ENCODE measurements at regions of chr11 and their contacts with region 1.

Region 1: DNA sequence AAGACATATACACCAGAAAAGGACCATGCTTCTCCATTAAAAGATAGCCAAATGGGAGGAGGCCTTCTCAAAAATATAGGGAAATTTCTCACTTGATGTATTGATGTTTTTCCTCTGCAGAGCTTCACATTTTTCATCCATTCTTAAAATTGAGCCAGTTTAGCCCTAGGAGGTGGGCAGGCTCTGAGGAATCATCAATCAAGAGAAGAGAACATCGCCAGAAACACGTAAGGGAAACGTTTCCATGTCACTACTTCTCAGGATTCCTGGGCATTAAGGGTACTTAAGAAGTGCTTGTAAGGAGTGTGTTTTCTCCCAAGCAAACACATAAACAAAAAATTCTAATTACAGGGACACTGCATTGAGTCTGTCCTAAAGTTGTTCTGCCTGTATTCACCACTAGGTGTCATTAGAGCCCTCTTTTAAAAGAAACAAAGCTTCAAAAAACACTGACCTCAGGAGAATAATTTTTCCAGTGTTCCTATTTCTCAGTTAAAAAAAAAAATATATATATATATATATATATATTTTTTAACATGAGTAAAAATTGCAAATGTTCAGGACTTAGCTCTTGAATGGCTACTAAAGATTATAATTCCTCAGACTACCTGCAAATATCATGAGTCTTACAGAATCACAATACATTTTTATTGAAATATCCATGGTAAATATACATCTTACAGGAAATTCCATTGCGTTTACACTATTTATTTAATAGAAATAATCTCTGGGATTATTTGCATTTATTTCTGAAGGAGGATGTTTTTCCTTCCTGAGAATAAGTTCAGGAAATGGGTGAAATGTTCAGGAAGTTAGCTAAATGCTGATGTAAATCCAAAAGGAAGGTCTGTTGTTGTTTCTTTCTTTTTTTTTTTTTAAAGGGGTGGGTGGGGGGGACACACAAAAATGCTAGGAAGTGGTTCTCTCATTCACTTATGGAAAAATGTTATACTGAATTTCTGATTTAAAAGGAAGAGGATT is 16.0 kb downstream of the FZD4 start:
- DNase-seq: peak in 1 of 35 experiments; percentile 62
- ATAC-seq: peak in 2 of 4 experiments; percentile 31 to 32
- H3K4me3 ChIP-seq: no peak overlapping the region
- H3K4me3 Mint-ChIP-seq: no peak overlapping the region
- H3K27ac ChIP-seq: no peak overlapping the region
- H3K27ac Mint-ChIP-seq: no peak overlapping the region
- H3K4me1 ChIP-seq: no peaks in the 10 kb centered on the region
- H3K4me1 Mint-ChIP-seq: no peaks in the 10 kb centered on the region
- H3K27me3 ChIP-seq: no peaks in the 10 kb centered on the region
- H3K27me3 Mint-ChIP-seq: peaks cover 6 to 10% of the 10 kb centered on the region in 2 donors

Region 2: GRCh38 chr11:87290304-87290922 is 351.2 kb after region 1 on chr11:
- CTCF ChIA-PET with region 1: interaction called, 26 to 27 read pairs
- POLR2A ChIA-PET with region 1: no interaction called
- DNase-seq: peak in 1 of 35 experiments; percentile 70
- ATAC-seq: no peak
- H3K4me3 ChIP-seq: no peak overlapping the region
- H3K4me3 Mint-ChIP-seq: no peak overlapping the region
- H3K27ac ChIP-seq: no peak overlapping the region
- H3K27ac Mint-ChIP-seq: no peak overlapping the region
- H3K4me1 ChIP-seq: no peaks in the 10 kb centered on the region
- H3K4me1 Mint-ChIP-seq: no peaks in the 10 kb centered on the region
- H3K27me3 ChIP-seq: no peaks in the 10 kb centered on the region
- H3K27me3 Mint-ChIP-seq: no peaks in the 10 kb centered on the region

Region 3: GRCh38 chr11:87300640-87301380 is 361.6 kb after region 1 on chr11:
- CTCF ChIA-PET with region 1: interaction called in 1 of 2 experiments, 12 read pairs
- POLR2A ChIA-PET with region 1: no interaction called
- DNase-seq: no peak
- ATAC-seq: no peak
- H3K4me3 ChIP-seq: no peak overlapping the region
- H3K4me3 Mint-ChIP-seq: no peak overlapping the region
- H3K27ac ChIP-seq: no peak overlapping the region
- H3K27ac Mint-ChIP-seq: no peak overlapping the region
- H3K4me1 ChIP-seq: no peaks in the 10 kb centered on the region
- H3K4me1 Mint-ChIP-seq: peaks cover 3 to 5% (median 4%) of the 10 kb centered on the region in 3 donors
- H3K27me3 ChIP-seq: no peaks in the 10 kb centered on the region
- H3K27me3 Mint-ChIP-seq: no peaks in the 10 kb centered on the region

Region 4: DNA sequence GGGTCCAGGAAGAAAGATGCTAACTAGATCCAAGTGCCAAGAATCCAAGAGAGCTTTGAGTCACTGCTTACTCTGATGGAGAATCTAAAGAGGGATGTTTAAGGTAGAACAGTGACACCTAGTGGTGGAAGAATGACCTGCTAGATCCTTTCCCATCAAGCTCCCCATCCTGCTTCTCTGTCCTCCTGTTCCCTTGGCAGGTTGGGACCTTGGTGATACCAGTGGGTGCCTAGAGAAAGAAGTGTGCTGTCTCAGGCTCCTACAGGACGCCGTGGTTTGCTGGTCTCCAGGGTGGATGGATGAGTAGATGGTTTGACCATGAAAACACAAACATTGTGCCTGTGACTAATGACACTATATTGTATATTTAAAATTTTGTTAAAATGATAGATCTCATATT is 482.2 kb after region 1 on chr11:
- CTCF ChIA-PET with region 1: interaction called, 12 to 22 read pairs
- POLR2A ChIA-PET with region 1: no interaction called
- DNase-seq: peak in 11 of 35 experiments; percentile 0 to 72 (median 3)
- ATAC-seq: no peak
- H3K4me3 ChIP-seq: no peak overlapping the region
- H3K4me3 Mint-ChIP-seq: no peak overlapping the region
- H3K27ac ChIP-seq: no peak overlapping the region
- H3K27ac Mint-ChIP-seq: no peak overlapping the region
- H3K4me1 ChIP-seq: no peaks in the 10 kb centered on the region
- H3K4me1 Mint-ChIP-seq: no peaks in the 10 kb centered on the region
- H3K27me3 ChIP-seq: peaks cover 0 to 2% of the 10 kb centered on the region in 2 experiments
- H3K27me3 Mint-ChIP-seq: peaks cover 7 to 8% of the 10 kb centered on the region in 2 donors

Region 5: DNA sequence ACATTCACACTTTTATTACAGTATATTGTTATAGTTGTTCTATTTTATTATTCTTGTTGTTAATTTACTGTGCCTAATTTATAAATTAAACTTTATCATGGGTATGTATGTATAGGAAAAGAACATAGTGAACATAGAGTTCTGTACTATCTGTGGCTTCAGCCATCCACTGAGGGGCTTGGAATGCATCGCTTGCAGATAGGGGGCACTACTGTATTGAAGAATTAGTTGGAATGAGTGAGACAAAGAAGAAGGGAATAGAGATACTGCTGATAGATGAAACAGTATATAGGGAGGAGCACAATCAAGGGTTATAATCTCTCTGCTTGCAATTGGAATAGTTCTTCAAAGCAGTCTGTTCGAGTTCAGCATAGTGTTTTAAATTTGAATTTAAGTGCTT is 803.8 kb after region 1 on chr11:
- CTCF ChIA-PET with region 1: interaction called in 1 of 2 experiments, 11 read pairs
- POLR2A ChIA-PET with region 1: no interaction called
- DNase-seq: no peak
- ATAC-seq: no peak
- H3K4me3 ChIP-seq: no peak overlapping the region
- H3K4me3 Mint-ChIP-seq: no peak overlapping the region
- H3K27ac ChIP-seq: no peak overlapping the region
- H3K27ac Mint-ChIP-seq: no peak overlapping the region
- H3K4me1 ChIP-seq: no peaks in the 10 kb centered on the region
- H3K4me1 Mint-ChIP-seq: no peaks in the 10 kb centered on the region
- H3K27me3 ChIP-seq: no peaks in the 10 kb centered on the region
- H3K27me3 Mint-ChIP-seq: no peaks in the 10 kb centered on the region